ENCODE measurements at regions of chr18 and their contacts with region 1.

Region 1: GRCh38 chr18:48813833-48814489 is 136.8 kb downstream of the SMAD7 start:
- DNase-seq: peak; percentile 71 to 86 (median 80)
- H3K4me3 ChIP-seq: no peak overlapping the region
- H3K4me3 Mint-ChIP-seq: peak overlapping the region; percentile 22 to 86 (median 59)
- H3K27ac ChIP-seq: peak overlapping the region; percentile 82
- H3K27ac Mint-ChIP-seq: peak overlapping the region; percentile 91 to 99 (median 97)
- H3K4me1 ChIP-seq: peaks cover 47% of the 10 kb centered on the region
- H3K4me1 Mint-ChIP-seq: peaks cover 41 to 66% (median 54%) of the 10 kb centered on the region in 4 donors
- H3K27me3 ChIP-seq: no peaks in the 10 kb centered on the region
- H3K27me3 Mint-ChIP-seq: no peaks in the 10 kb centered on the region

Region 2: DNA sequence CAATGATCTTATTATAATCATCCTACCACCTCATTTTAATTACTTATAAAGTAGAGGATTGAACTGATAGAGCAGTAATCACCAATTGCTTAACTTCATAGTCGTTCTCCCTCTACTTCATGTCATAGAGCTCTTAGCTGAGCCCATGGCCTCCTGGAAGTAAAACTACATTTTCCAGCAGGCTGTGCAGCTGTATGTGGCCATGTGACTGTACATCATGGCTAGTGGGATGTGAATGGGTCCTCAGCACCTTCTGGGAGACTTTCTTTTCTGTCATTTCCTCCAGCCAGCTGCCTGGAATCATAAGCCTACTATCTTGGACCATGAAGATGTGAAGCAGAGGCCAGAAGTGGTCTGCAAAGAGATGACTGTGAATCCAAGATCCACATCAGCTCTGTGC is 1433.8 kb before region 1 on chr18:
- CTCF ChIA-PET with region 1: no interaction called
- POLR2A ChIA-PET with region 1: no interaction called
- intact Hi-C with region 1: no loop called
- DNase-seq: no peak
- H3K4me3 ChIP-seq: no peak overlapping the region
- H3K4me3 Mint-ChIP-seq: no peak overlapping the region
- H3K27ac ChIP-seq: no peak overlapping the region
- H3K27ac Mint-ChIP-seq: no peak overlapping the region
- H3K4me1 ChIP-seq: no peaks in the 10 kb centered on the region
- H3K4me1 Mint-ChIP-seq: no peaks in the 10 kb centered on the region
- H3K27me3 ChIP-seq: no peaks in the 10 kb centered on the region
- H3K27me3 Mint-ChIP-seq: peaks cover 2 to 5% of the 10 kb centered on the region in 2 donors

Region 3: GRCh38 chr18:48827291-48828193 is 13.6 kb after region 1 on chr18:
- CTCF ChIA-PET with region 1: interaction called, 7 read pairs
- POLR2A ChIA-PET with region 1: interaction called, 101 read pairs
- intact Hi-C with region 1: no loop called
- DNase-seq: no peak
- H3K4me3 ChIP-seq: no peak overlapping the region
- H3K4me3 Mint-ChIP-seq: peak overlapping the region in 2 of 8 donors; percentile 15 to 17
- H3K27ac ChIP-seq: no peak overlapping the region
- H3K27ac Mint-ChIP-seq: peak overlapping the region in 2 of 7 donors; percentile 37 to 55
- H3K4me1 ChIP-seq: peaks cover 32% of the 10 kb centered on the region
- H3K4me1 Mint-ChIP-seq: peaks cover 13 to 45% (median 26%) of the 10 kb centered on the region in 4 donors
- H3K27me3 ChIP-seq: no peaks in the 10 kb centered on the region
- H3K27me3 Mint-ChIP-seq: no peaks in the 10 kb centered on the region

Region 4: DNA sequence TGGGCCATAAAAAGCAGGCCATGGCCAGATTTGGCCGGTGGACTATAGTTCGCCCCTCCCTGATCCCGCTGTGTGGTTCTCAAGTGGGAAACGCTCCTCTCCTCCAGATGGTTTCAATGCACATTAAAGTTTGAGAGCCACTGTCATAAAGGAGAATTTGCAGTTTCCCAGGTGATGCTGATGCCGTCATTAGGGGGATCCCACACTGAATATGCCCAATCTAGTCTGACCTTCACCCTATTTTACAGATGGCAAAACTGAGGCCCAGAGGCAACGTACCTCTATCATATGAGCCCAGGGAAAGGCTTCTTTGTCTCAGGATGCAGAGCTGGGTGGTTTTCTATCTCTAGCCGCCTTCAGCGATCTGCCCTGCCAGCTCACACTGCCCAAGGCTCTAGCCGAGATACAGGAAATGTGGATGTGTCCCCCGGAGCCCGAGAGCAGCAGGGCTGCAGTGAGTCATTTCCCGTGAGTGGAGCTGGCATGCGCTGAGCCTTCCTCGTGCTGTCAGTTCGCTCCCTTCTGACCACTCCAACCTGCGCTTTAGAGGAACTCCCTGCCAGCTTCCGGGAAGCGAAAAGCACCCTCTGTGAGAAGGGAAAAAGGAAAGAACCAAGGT is 20.6 kb after region 1 on chr18:
- CTCF ChIA-PET with region 1: interaction called, 8 read pairs
- POLR2A ChIA-PET with region 1: interaction called, 101 read pairs
- intact Hi-C with region 1: loop called (anchors 1 kb)
- DNase-seq: peak; percentile 58 to 90 (median 62)
- H3K4me3 ChIP-seq: peak overlapping the region; percentile 42 to 54
- H3K4me3 Mint-ChIP-seq: peak overlapping the region; percentile 81 to 98 (median 90)
- H3K27ac ChIP-seq: peak overlapping the region; percentile 74
- H3K27ac Mint-ChIP-seq: peak overlapping the region; percentile 90 to 97 (median 96)
- H3K4me1 ChIP-seq: peaks cover 100% of the 10 kb centered on the region
- H3K4me1 Mint-ChIP-seq: peaks cover 59 to 100% (median 79%) of the 10 kb centered on the region in 4 donors
- H3K27me3 ChIP-seq: no peaks in the 10 kb centered on the region
- H3K27me3 Mint-ChIP-seq: no peaks in the 10 kb centered on the region

Region 5: GRCh38 chr18:48842259-48843061 is 28.5 kb after region 1 on chr18:
- CTCF ChIA-PET with region 1: interaction called, 3 read pairs
- POLR2A ChIA-PET with region 1: interaction called, 24 read pairs
- intact Hi-C with region 1: no loop called
- DNase-seq: peak; percentile 77 to 83 (median 78)
- H3K4me3 ChIP-seq: peak overlapping the region in 1 of 2 donors; percentile 34
- H3K4me3 Mint-ChIP-seq: peak overlapping the region; percentile 43 to 87 (median 74)
- H3K27ac ChIP-seq: peak overlapping the region; percentile 62
- H3K27ac Mint-ChIP-seq: peak overlapping the region; percentile 94 to 99 (median 97)
- H3K4me1 ChIP-seq: peaks cover 85% of the 10 kb centered on the region
- H3K4me1 Mint-ChIP-seq: peaks cover 68 to 84% (median 77%) of the 10 kb centered on the region in 4 donors
- H3K27me3 ChIP-seq: no peaks in the 10 kb centered on the region
- H3K27me3 Mint-ChIP-seq: no peaks in the 10 kb centered on the region

Region 6: GRCh38 chr18:48913201-48913600 is 99.2 kb after region 1 on chr18:
- CTCF ChIA-PET with region 1: interaction called, 12 read pairs
- POLR2A ChIA-PET with region 1: interaction called, 8 read pairs
- intact Hi-C with region 1: no loop called
- DNase-seq: peak; percentile 56 to 68 (median 62)
- H3K4me3 ChIP-seq: no peak overlapping the region
- H3K4me3 Mint-ChIP-seq: no peak overlapping the region
- H3K27ac ChIP-seq: no peak overlapping the region
- H3K27ac Mint-ChIP-seq: peak overlapping the region in 3 of 7 donors; percentile 73 to 89 (median 81)
- H3K4me1 ChIP-seq: peaks cover 14% of the 10 kb centered on the region
- H3K4me1 Mint-ChIP-seq: peaks cover 16 to 48% (median 24%) of the 10 kb centered on the region in 4 donors
- H3K27me3 ChIP-seq: no peaks in the 10 kb centered on the region
- H3K27me3 Mint-ChIP-seq: peaks cover 0 to 1% of the 10 kb centered on the region in 2 donors

Region 7: GRCh38 chr18:48940854-48941611 is 127.1 kb after region 1 on chr18:
- CTCF ChIA-PET with region 1: no interaction called
- POLR2A ChIA-PET with region 1: interaction called, 13 read pairs
- intact Hi-C with region 1: no loop called
- DNase-seq: peak; percentile 93 to 97 (median 94)
- H3K4me3 ChIP-seq: peak overlapping the region; percentile 14 to 18
- H3K4me3 Mint-ChIP-seq: peak overlapping the region; percentile 82 to 94 (median 87)
- H3K27ac ChIP-seq: peak overlapping the region; percentile 49
- H3K27ac Mint-ChIP-seq: peak overlapping the region; percentile 89 to 100 (median 98)
- H3K4me1 ChIP-seq: peaks cover 97% of the 10 kb centered on the region
- H3K4me1 Mint-ChIP-seq: peaks cover 76 to 100% (median 87%) of the 10 kb centered on the region in 4 donors
- H3K27me3 ChIP-seq: no peaks in the 10 kb centered on the region
- H3K27me3 Mint-ChIP-seq: no peaks in the 10 kb centered on the region

Measured in CD4-positive, alpha-beta memory T cell (primary cell).